RWPE1 (cell line): ENCODE measurements at regions of chr5 and their contacts with region 1.

Region 1: GRCh38 chr5:140977003-140977402 is 10.7 kb downstream of the PCDHAC2 start:
- DNase-seq: peak; percentile 59
- H3K27ac ChIP-seq: no peak overlapping the region
- CTCF ChIP-seq: no peak

Region 2: GRCh38 chr5:140764177-140765020 is 212.6 kb before region 1 on chr5:
- CTCF ChIA-PET with region 1: no interaction called
- POLR2A ChIA-PET with region 1: no interaction called
- DNase-seq: no peak
- H3K27ac ChIP-seq: no peak overlapping the region
- CTCF ChIP-seq: no peak

Region 3: DNA sequence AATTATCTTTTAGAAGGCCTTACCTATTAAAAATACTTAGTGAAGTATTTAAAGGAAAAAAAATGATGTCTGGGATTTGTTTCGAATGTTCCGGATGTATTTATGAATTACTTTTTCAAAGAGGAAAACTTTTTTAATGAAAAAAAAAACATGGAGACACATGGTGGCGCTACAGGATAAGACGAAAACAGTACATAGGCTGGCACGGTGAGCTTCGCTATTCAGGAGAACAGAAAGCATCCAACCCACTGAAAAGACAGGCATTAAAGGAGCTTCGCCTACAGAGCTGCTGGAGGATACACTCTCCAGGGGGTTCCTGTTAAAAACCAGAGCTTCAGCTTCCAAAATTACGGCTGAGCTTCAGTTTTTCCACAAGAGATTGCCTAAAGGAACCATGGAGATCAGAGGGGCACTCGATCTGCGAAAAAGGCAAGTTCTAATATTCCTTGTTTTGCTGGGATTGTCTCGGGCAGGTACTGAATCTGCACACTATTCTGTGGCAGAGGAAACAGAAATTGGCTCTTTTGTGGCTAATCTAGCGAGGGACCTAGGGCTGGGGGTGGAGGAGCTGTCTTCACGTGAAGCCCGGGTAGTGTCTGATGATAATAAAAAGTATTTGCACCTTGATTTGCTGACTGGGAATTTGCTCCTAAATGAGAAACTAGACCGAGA is 246.2 kb after region 1 on chr5 and contains the start of gene PCDHB14:
- CTCF ChIA-PET with region 1: interaction called, 10 read pairs
- POLR2A ChIA-PET with region 1: no interaction called
- DNase-seq: peak; percentile 60
- H3K27ac ChIP-seq: no peak within 1 kb of the TSS
- CTCF ChIP-seq: peak; percentile 57; the same call in 1 of the 2 replicates

Region 4: DNA sequence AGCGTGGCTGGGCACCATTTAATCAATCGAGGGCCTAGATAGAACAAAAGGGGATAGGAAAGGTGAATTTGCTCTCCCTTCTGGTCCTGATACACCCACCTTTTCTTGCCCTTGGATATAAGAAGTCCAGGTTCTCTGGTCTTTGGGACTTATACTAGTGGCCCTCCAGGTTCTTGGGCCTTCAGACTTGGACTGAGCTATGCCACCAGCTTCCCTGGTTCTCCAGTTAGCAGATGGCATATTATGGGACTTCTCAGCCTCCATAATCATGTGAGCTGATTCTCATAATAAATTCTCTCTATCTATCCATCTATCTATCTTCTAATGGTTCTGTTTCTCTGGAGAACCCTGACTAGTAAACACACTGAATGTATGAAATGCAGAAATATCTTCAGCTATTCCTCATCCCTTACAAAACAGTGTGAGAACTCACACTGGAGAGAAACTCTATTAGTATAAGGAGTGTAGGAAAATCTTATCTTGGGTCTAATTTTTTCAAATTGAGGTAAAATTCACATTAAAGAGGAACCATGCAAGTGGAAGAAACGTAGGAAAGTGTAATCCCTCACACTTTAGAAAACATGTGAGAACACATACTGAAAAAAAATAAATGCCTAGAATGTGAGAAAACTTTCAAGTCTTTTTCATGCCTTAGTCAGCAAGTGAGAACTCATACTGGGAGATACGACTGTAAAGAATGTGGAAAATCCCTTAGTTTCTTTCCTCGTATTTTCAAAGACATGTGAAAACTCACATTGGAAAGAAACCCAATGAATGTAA is 283.6 kb after region 1 on chr5:
- CTCF ChIA-PET with region 1: no interaction called
- POLR2A ChIA-PET with region 1: no interaction called
- DNase-seq: no peak
- H3K27ac ChIP-seq: no peak overlapping the region
- CTCF ChIP-seq: no peak